Naive thymus-derived CD4-positive, alpha-beta T cell (primary cell): ENCODE measurements at regions of chr1 and their contacts with region 1.

Region 1: GRCh38 chr1:202625416-202626360 is 84.6 kb downstream of the SYT2 start:
- DNase-seq: peak; percentile 21 to 61 (median 47)
- ATAC-seq: peak; percentile 75
- H3K4me3 ChIP-seq: no peak overlapping the region
- H3K4me3 Mint-ChIP-seq: peak overlapping the region in 1 of 10 donors; percentile 31
- H3K27ac ChIP-seq: no peak overlapping the region
- H3K27ac Mint-ChIP-seq: no peak overlapping the region
- H3K4me1 ChIP-seq: peaks cover 30 to 34% of the 10 kb centered on the region in 2 donors
- H3K4me1 Mint-ChIP-seq: peaks cover 18 to 39% (median 36%) of the 10 kb centered on the region in 7 donors
- H3K27me3 ChIP-seq: no peaks in the 10 kb centered on the region
- H3K27me3 Mint-ChIP-seq: peaks cover 9 to 21% (median 14%) of the 10 kb centered on the region in 5 donors

Region 2: GRCh38 chr1:202462342-202463076 is 163.2 kb before region 1 on chr1:
- CTCF ChIA-PET with region 1: no interaction called
- POLR2A ChIA-PET with region 1: no interaction called
- intact Hi-C with region 1: loop called in 1 of 2 experiments (anchors 1 kb)
- DNase-seq: no peak
- ATAC-seq: no peak
- H3K4me3 ChIP-seq: no peak overlapping the region
- H3K4me3 Mint-ChIP-seq: no peak overlapping the region
- H3K27ac ChIP-seq: no peak overlapping the region
- H3K27ac Mint-ChIP-seq: peak overlapping the region in 1 of 9 donors; percentile 53
- H3K4me1 ChIP-seq: no peaks in the 10 kb centered on the region
- H3K4me1 Mint-ChIP-seq: peaks cover 0 to 4% (median 0%) of the 10 kb centered on the region in 7 donors
- H3K27me3 ChIP-seq: no peaks in the 10 kb centered on the region
- H3K27me3 Mint-ChIP-seq: no peaks in the 10 kb centered on the region

Region 3: DNA sequence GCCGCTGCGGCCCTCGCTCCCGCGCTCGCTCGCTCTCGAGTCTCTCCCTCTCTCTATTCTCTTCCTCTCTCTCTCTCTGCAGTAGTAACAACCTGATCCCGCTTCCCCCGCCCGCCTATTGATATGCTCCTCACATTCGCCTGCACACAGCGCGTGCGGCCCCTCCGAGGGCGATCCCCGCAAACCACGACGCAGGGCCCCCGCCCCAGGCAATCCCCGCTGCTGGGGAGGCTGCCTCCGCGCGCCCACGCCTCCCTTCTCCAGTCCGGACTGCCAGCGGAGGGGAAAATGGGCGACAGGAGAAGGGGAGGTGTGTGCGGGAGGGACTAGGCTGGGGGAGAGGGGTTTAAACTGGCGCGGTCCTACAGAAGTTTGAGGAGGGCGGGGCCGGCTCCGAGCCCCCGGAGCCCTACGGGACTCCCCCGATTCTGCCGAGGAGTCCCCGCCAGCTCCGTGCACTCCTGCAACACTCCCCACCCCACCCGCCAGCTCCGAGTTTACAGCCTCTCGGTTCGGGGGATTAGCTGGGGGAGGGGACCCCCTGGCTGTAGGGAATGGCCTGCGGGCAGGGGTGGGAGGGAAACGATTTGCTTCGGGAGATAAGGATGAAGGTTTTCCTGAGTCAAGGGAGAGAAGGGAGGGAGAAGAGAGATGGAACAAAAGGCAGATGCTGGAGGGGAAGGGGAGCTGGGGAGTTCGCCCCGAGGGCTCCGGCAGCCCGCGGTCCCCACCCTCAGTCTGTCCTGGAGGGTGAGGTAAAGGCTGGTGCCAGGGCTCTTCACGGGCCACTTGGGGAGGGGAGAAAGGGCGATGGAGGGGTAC is 17.9 kb after region 1 on chr1:
- CTCF ChIA-PET with region 1: no interaction called
- POLR2A ChIA-PET with region 1: no interaction called
- intact Hi-C with region 1: loop called in 1 of 2 experiments (anchors 2 kb)
- DNase-seq: peak in 4 of 9 donors; percentile 21 to 45 (median 27)
- ATAC-seq: peak; percentile 45
- H3K4me3 ChIP-seq: no peak overlapping the region
- H3K4me3 Mint-ChIP-seq: peak overlapping the region; percentile 59 to 88 (median 76)
- H3K27ac ChIP-seq: no peak overlapping the region
- H3K27ac Mint-ChIP-seq: peak overlapping the region in 1 of 9 donors; percentile 14
- H3K4me1 ChIP-seq: peaks cover 4 to 13% of the 10 kb centered on the region in 2 donors
- H3K4me1 Mint-ChIP-seq: peaks cover 0 to 24% (median 13%) of the 10 kb centered on the region in 7 donors
- H3K27me3 ChIP-seq: peaks cover 10 to 16% of the 10 kb centered on the region in 2 donors
- H3K27me3 Mint-ChIP-seq: peaks cover 47 to 94% (median 70%) of the 10 kb centered on the region in 5 donors

Region 4: GRCh38 chr1:202852163-202852904 is 226.6 kb after region 1 on chr1:
- CTCF ChIA-PET with region 1: no interaction called
- POLR2A ChIA-PET with region 1: no interaction called
- intact Hi-C with region 1: no loop called
- DNase-seq: peak in 3 of 9 donors; percentile 20 to 43 (median 25)
- ATAC-seq: peak; percentile 70
- H3K4me3 ChIP-seq: no peak overlapping the region
- H3K4me3 Mint-ChIP-seq: no peak overlapping the region
- H3K27ac ChIP-seq: no peak overlapping the region
- H3K27ac Mint-ChIP-seq: peak overlapping the region in 2 of 9 donors; percentile 14 to 53
- H3K4me1 ChIP-seq: no peaks in the 10 kb centered on the region
- H3K4me1 Mint-ChIP-seq: peaks cover 0 to 27% (median 0%) of the 10 kb centered on the region in 7 donors
- H3K27me3 ChIP-seq: no peaks in the 10 kb centered on the region
- H3K27me3 Mint-ChIP-seq: no peaks in the 10 kb centered on the region